Gastrocnemius medialis (tissue), 4 donors: ENCODE measurements at regions of chr20 and their contacts with region 1.

Region 1: GRCh38 chr20:34849778-34850177 is 22.9 kb downstream of the GGT7 start:
- DNase-seq: no peak
- ATAC-seq: no peak
- H3K4me3 ChIP-seq: no peak overlapping the region
- H3K27ac ChIP-seq: no peak overlapping the region
- H3K4me1 ChIP-seq: no peaks in the 10 kb centered on the region
- H3K27me3 ChIP-seq: no peaks in the 10 kb centered on the region
- CTCF ChIP-seq: no peak
- POLR2A ChIP-seq: no peak

Region 2: GRCh38 chr20:35215066-35215956 is 365.5 kb after region 1 on chr20:
- in situ Hi-C with region 1: loop called in 2 of 4 experiments (anchors 10 to 25 kb)
- intact Hi-C with region 1: no loop called
- DNase-seq: no peak
- ATAC-seq: no peak
- H3K4me3 ChIP-seq: no peak overlapping the region
- H3K27ac ChIP-seq: no peak overlapping the region
- H3K4me1 ChIP-seq: no peaks in the 10 kb centered on the region
- H3K27me3 ChIP-seq: no peaks in the 10 kb centered on the region
- CTCF ChIP-seq: no peak
- POLR2A ChIP-seq: no peak